PC-3 (cell line): ENCODE measurements at regions of chr1 and their contacts with region 1.

Region 1: DNA sequence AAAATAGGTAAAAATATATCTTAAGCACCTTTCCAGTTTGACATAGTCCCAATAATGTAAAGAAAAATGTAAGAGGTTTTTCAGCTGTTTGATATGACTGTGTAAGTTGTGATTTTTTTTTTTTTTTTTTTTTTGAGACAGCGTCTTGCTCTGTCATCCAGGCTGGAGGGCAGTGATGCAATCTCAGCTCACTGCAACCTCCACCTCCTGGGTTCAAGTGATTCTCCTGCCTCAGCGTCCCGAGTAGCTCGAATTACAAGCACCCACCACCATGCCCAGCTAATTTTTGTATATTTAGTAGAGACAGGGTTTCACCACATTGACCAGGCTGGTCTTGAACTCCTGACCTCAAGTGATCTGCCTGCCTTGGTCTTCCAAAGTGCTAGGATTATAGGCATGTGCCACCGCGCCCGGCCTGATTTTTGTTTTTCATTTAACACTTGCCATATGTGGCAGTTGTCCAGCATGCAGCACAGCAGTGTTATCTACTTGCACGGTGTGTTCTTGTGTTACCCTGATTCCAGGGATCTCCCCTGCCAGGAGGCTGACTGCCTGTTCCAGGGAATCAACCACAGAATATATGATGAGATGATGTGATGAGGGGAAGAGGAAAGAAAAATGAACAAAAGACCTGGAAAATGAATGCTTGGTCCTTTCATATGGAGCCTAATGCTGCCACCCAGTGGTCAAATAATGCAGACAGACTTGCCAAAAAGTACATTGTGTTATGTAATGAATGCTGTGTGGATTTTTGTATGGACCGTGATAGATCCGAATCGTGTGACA is 79.0 kb downstream of the RAVER2 start:
- DNase-seq: peak; percentile 84
- ATAC-seq: peak; percentile 73
- H3K4me3 ChIP-seq: no peak overlapping the region
- H3K27ac ChIP-seq: no peak overlapping the region
- H3K4me1 ChIP-seq: no peaks in the 10 kb centered on the region
- H3K27me3 ChIP-seq: no peaks in the 10 kb centered on the region
- CTCF ChIP-seq: peak; percentile 93

Region 2: GRCh38 chr1:64686828-64687724 is 136.8 kb before region 1 on chr1:
- CTCF ChIA-PET with region 1: no interaction called
- POLR2A ChIA-PET with region 1: no interaction called
- intact Hi-C with region 1: loop called (anchors 1 kb)
- DNase-seq: peak; percentile 76
- ATAC-seq: peak; percentile 81
- H3K4me3 ChIP-seq: peak overlapping the region; percentile 25; the same call in 1 of the 2 replicates
- H3K27ac ChIP-seq: peak overlapping the region; percentile 70
- H3K4me1 ChIP-seq: peaks cover 28% of the 10 kb centered on the region
- H3K27me3 ChIP-seq: no peaks in the 10 kb centered on the region
- CTCF ChIP-seq: peak; percentile 90

Region 3: DNA sequence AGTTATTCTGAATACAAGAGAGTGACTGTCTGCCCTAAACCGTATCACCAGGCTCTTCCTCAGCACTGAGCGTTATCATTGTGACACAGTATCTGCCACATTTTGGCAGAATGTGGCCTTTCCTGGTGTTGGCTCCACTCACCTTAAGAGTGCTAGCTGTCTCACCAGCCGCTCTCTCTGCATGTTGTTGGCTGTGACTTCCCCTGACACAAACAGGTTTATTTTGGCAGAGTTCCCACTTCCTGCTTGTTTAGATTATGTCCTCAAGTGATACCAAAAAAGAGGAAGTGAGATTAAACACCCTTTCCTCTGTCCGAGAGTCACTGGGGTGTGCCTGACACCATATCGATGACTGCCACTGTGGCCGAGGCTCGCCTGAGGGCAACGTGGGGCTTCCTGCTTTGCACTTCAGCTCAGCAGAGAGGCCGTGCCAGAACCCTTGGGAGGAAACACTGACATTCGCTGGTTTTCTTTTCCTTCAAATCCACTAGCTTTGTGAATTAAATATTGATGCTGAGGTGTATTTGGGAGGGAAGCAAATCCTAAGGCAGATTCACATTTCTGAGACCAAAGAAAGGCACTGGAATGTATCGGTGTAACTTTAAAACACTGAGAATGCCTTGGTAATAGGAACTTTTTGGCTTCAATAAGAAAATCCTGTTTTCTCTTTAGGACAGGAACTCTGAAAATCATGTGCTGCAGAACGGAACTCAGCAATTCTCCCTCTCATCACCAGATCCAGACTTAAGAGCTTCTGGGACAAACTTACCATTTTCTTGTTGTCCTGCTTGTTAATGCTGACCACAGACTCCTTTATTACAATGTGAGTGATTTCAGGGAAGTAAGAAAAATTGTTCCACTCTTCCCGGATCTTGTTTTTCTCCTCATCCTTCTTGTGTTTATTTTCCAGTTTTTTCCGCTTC is 40.4 kb after region 1 on chr1:
- CTCF ChIA-PET with region 1: no interaction called
- POLR2A ChIA-PET with region 1: no interaction called
- intact Hi-C with region 1: no loop called
- DNase-seq: peak; percentile 84
- ATAC-seq: peak; percentile 90
- H3K4me3 ChIP-seq: no peak overlapping the region
- H3K27ac ChIP-seq: peak overlapping the region; percentile 44
- H3K4me1 ChIP-seq: peaks cover 17% of the 10 kb centered on the region
- H3K27me3 ChIP-seq: no peaks in the 10 kb centered on the region
- CTCF ChIP-seq: no peak